Gastrocnemius medialis (tissue), 4 donors: ENCODE measurements at regions of chr17 and their contacts with region 1.

Region 1: DNA sequence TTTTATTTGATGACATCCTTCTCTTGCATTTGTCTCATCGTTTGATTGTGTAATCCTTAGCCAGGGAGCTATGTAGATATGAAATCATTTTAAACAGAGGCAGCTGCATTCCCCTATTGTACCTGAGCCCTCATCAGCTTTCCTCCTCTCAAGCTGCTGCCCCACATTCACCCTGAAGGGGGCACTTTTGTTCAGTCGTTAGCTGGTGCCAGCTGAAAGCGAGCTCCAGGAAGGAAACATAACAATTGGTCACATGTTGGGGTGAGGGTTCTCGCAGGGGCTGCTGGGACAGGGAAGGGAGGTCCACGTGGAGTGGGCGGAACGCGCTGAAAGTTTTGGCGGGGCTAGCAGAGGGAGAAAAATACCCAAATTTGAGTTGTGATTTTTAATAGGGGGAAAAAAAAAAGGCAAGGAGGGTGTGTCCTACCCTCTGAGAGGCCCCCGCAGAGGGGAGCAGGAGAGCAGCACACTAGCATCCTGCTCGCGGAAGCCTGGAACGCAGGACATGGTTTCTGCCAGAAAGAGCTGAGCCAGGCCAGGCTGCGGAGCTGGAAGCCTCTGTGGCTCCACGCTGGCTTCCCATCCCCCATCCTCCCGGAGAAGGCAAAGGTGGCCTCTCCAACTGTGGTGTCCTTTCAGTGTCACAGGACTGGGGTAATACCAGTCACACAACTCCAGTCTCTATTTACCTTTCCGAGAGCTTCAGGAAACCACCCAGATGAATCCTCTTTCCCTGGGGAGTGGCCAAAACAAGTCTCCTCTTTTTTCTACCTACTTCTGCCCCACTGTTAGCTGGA is 8.5 kb upstream of the MSL1 start:
- DNase-seq: peak; percentile 95 to 96
- ATAC-seq: peak; percentile 65 to 76
- H3K4me3 ChIP-seq: peak overlapping the region; percentile 51 to 61 (median 58)
- H3K27ac ChIP-seq: peak overlapping the region; percentile 93 to 100 (median 96)
- H3K4me1 ChIP-seq: peaks cover 58 to 65% of the 10 kb centered on the region in 2 donors
- H3K27me3 ChIP-seq: no peaks in the 10 kb centered on the region
- CTCF ChIP-seq: peak; percentile 83 to 94 (median 92)
- POLR2A ChIP-seq: peak; percentile 37 to 62

Region 2: DNA sequence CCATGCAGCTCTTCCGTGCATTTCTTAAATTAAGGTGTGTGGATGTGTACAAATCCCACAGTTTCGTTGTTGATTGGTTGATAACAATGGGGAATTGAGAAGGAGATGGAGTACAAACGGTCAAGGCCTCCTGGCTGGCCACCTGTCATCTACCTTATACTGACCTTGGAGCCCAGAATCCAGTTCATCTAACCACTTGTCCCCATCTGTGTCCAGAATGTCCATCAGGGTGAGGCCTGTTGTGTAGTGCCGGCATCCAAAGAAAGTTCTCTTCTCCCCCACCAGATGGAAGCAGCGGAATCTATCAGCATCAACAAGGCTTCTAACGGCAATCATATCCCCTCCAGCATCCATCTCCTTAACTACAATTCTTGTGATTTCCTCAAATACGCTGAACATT is 196.4 kb before region 1 on chr17:
- in situ Hi-C with region 1: no loop called
- intact Hi-C with region 1: no loop called
- DNase-seq: no peak
- ATAC-seq: no peak
- H3K4me3 ChIP-seq: no peak overlapping the region
- H3K27ac ChIP-seq: no peak overlapping the region
- H3K4me1 ChIP-seq: no peaks in the 10 kb centered on the region
- H3K27me3 ChIP-seq: no peaks in the 10 kb centered on the region
- CTCF ChIP-seq: no peak
- POLR2A ChIP-seq: no peak

Region 3: GRCh38 chr17:40062329-40063186 is 50.8 kb before region 1 on chr17 and contains the start of gene THRA:
- in situ Hi-C with region 1: loop called in 1 of 4 experiments (anchors 5 kb)
- intact Hi-C with region 1: loop called (anchors 1 kb)
- DNase-seq: peak; percentile 55 to 67
- ATAC-seq: peak; percentile 59 to 61
- H3K4me3 ChIP-seq: peak within 1 kb of the TSS; percentile 84 to 100 (median 96)
- H3K27ac ChIP-seq: peak within 1 kb of the TSS; percentile 100
- H3K4me1 ChIP-seq: peaks cover 38 to 47% of the 10 kb centered on the region in 2 donors
- H3K27me3 ChIP-seq: no peaks in the 10 kb centered on the region
- CTCF ChIP-seq: peak in 2 of 5 experiments; percentile 26 to 27
- POLR2A ChIP-seq: peak; percentile 73 to 85
- total RNA-seq, gene THRA: 42.2 to 71.6 (median 48.2) TPM

Region 4: GRCh38 chr17:40098846-40099618 is 14.3 kb before region 1 on chr17:
- in situ Hi-C with region 1: no loop called
- intact Hi-C with region 1: loop called (anchors 1 kb)
- DNase-seq: peak; percentile 100
- ATAC-seq: peak; percentile 37 to 39
- H3K4me3 ChIP-seq: peak overlapping the region; percentile 76 to 100 (median 82)
- H3K27ac ChIP-seq: peak overlapping the region; percentile 94 to 100 (median 98)
- H3K4me1 ChIP-seq: peaks cover 78 to 80% of the 10 kb centered on the region in 2 donors
- H3K27me3 ChIP-seq: no peaks in the 10 kb centered on the region
- CTCF ChIP-seq: no peak
- POLR2A ChIP-seq: peak; percentile 99

Region 5: GRCh38 chr17:40168262-40168832 is 55.0 kb after region 1 on chr17:
- in situ Hi-C with region 1: loop called in 2 of 4 experiments (anchors 5 to 10 kb)
- intact Hi-C with region 1: loop called (anchors 1 kb)
- DNase-seq: no peak
- ATAC-seq: peak; percentile 76 to 81
- H3K4me3 ChIP-seq: no peak overlapping the region
- H3K27ac ChIP-seq: peak overlapping the region in 3 of 4 donors; percentile 11 to 48 (median 48)
- H3K4me1 ChIP-seq: no peaks in the 10 kb centered on the region
- H3K27me3 ChIP-seq: no peaks in the 10 kb centered on the region
- CTCF ChIP-seq: peak; percentile 76 to 84 (median 81)
- POLR2A ChIP-seq: no peak

Region 6: DNA sequence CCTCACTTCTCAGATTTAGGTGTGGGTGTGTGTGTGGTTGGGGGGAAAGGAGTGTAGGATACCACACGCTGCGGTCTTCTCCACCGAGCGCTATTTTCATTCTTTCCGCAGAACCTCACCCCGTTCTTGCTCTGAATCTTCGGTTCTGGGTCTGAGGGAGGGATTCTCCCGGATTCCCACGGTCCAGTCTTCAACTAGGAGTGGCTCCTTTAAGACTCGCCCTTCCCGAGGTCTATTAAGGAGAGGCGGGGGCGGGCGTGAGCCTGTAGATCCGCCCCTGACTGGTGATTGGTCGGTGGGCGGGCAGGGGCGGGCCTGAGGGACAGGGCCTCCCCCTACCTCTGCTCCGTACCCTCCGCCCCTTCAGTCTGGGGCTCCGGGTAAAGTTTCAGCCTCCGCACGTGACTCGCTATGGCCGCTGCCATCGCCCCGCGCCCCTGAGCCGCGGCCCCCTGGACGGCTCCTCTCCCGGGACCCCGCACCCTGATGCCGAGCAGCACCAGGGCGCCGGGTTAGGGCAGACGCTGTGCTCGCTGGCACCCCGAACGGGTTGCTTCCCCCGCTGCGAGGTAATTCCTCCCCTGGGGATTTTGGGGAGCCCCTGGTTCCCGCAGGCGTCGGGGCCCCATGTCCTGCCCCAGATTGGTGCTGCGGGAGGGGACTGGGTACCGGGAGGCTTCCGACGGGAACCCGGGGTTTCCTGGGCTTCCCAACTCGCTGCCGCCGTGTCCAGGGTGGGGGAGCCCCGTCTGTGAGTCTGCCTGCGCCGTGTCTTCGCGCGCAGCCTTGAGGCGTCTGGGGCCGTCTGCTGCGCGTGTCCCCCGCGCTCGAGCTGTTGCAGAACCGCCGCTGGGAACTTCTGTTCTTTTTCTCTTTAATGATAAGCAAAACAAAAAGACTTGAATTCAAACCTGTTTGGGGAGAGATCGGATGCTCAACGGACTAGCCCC is 204.8 kb after region 1 on chr17:
- in situ Hi-C with region 1: no loop called
- intact Hi-C with region 1: loop called (anchors 5 kb)
- DNase-seq: peak; percentile 97 to 98
- ATAC-seq: peak; percentile 43 to 66
- H3K4me3 ChIP-seq: peak overlapping the region; percentile 82 to 100 (median 90)
- H3K27ac ChIP-seq: peak overlapping the region; percentile 95 to 100 (median 98)
- H3K4me1 ChIP-seq: peaks cover 76 to 89% of the 10 kb centered on the region in 2 donors
- H3K27me3 ChIP-seq: no peaks in the 10 kb centered on the region
- CTCF ChIP-seq: no peak
- POLR2A ChIP-seq: peak; percentile 98